ENCODE measurements at regions of chr6 and their contacts with region 1.

Region 1: GRCh38 chr6:46410334-46410953 is 80.8 kb downstream of the RCAN2 start:
- DNase-seq: peak; percentile 32
- ATAC-seq: peak; percentile 44; the same call in 1 of the 2 replicates
- H3K4me3 ChIP-seq: no peak overlapping the region
- H3K27ac ChIP-seq: no peak overlapping the region
- H3K4me1 ChIP-seq: no peaks in the 10 kb centered on the region
- H3K27me3 ChIP-seq: no peaks in the 10 kb centered on the region
- CTCF ChIP-seq: peak; percentile 49 to 77 (median 76); a peak in 5 of 6 replicates
- POLR2A ChIP-seq: no peak
- RAD21 ChIP-seq: peak; percentile 91

Region 2: DNA sequence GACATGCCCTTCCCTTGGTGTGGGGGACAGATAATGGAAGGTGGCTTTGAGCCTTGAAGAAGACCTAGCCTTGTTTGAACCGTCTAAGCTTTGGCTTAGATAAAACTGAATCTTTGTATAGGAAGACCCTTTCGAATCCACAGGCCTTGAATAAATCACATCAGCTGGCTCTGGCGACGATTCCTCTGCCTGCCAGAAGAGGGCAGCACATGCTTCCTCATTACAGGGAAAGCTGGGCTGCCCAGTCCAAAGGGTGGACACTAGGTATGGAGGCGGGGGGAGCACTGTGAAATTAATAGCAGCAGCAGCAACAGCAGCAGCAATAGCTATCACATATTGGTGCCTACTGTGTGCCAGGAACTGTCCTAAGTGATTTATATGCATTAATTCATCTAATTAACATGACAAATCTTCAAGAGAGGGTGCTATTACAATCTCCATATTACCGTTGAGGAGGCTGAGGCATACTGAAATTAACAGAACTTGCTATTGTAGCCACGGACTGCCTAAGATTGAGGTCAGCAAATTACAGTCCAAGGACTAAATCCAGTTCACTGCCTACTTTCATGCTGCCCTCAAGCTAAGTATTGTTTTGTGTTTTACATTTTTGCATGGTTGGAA is 479.9 kb before region 1 on chr6:
- CTCF ChIA-PET with region 1: interaction called, 17 read pairs
- POLR2A ChIA-PET with region 1: no interaction called
- RAD21 ChIA-PET with region 1: interaction called in 1 of 2 experiments, 6 read pairs
- intact Hi-C with region 1: loop called (anchors 1 kb)
- DNase-seq: peak; percentile 54
- ATAC-seq: peak; percentile 92
- H3K4me3 ChIP-seq: no peak overlapping the region
- H3K27ac ChIP-seq: no peak overlapping the region
- H3K4me1 ChIP-seq: peaks cover 0 to 4% of the 10 kb centered on the region in 2 experiments; a peak in 1 of 4 replicates
- H3K27me3 ChIP-seq: no peaks in the 10 kb centered on the region
- CTCF ChIP-seq: peak; percentile 67 to 99 (median 94); a peak in 5 of 6 replicates
- POLR2A ChIP-seq: no peak
- RAD21 ChIP-seq: peak; percentile 88

Region 3: GRCh38 chr6:46042355-46042999 is 368.0 kb before region 1 on chr6:
- CTCF ChIA-PET with region 1: interaction called, 3 read pairs
- POLR2A ChIA-PET with region 1: no interaction called
- RAD21 ChIA-PET with region 1: no interaction called
- intact Hi-C with region 1: loop called (anchors 2 kb)
- DNase-seq: peak; percentile 58
- ATAC-seq: peak; percentile 98
- H3K4me3 ChIP-seq: no peak overlapping the region
- H3K27ac ChIP-seq: no peak overlapping the region
- H3K4me1 ChIP-seq: peaks cover 5 to 11% of the 10 kb centered on the region in 2 experiments
- H3K27me3 ChIP-seq: no peaks in the 10 kb centered on the region
- CTCF ChIP-seq: peak; percentile 51 to 83 (median 64)
- POLR2A ChIP-seq: no peak
- RAD21 ChIP-seq: peak; percentile 69

Region 4: GRCh38 chr6:46221222-46221793 is 189.1 kb before region 1 on chr6:
- CTCF ChIA-PET with region 1: interaction called, 41 read pairs
- POLR2A ChIA-PET with region 1: interaction called, 3 read pairs
- RAD21 ChIA-PET with region 1: interaction called, 3 to 12 read pairs
- intact Hi-C with region 1: loop called (anchors 1 kb)
- DNase-seq: peak; percentile 18
- ATAC-seq: peak; percentile 83
- H3K4me3 ChIP-seq: no peak overlapping the region
- H3K27ac ChIP-seq: no peak overlapping the region
- H3K4me1 ChIP-seq: no peaks in the 10 kb centered on the region
- H3K27me3 ChIP-seq: 0 out of 2 replicates have a peak, but pooled peaks cover 4% of the 10 kb centered on the region
- CTCF ChIP-seq: peak; percentile 66 to 87 (median 74)
- POLR2A ChIP-seq: no peak
- RAD21 ChIP-seq: peak; percentile 85

Region 5: DNA sequence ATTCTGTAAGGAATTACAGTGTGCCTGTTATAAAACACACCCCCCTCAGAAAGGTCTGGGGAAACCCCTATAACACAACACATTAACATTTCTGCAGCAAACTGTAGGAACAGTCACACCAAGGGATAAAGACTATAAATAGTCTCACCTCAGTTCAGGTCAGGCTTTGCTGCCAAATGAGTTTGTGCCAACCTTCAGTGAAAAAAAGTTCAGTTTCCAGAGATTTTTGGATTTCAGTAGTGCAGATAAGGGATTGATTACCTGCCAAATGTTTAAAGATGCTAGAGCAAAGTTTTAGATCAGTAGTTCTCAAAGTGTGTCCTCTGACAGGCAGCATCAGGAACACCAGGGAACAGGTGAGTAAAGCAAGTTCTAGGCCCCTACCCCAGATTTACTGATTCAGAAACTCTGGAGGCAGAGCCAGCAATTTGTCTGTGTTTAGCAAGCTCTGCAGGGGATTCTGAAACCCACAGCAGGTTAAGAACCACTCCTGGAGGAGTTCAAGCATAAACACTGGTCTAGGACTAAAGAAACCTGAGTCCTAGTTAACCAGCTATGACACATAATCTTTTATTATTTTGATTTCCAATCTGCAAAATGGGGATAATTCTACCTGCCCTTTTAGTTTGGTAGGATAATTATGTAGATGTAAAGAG is 30.2 kb before region 1 on chr6:
- CTCF ChIA-PET with region 1: no interaction called
- POLR2A ChIA-PET with region 1: no interaction called
- RAD21 ChIA-PET with region 1: no interaction called
- intact Hi-C with region 1: no loop called
- DNase-seq: no peak
- ATAC-seq: no peak
- H3K4me3 ChIP-seq: no peak overlapping the region
- H3K27ac ChIP-seq: no peak overlapping the region
- H3K4me1 ChIP-seq: 0 out of 4 replicates have a peak, but pooled peaks cover 0 to 3% of the 10 kb centered on the region in 2 experiments
- H3K27me3 ChIP-seq: no peaks in the 10 kb centered on the region
- CTCF ChIP-seq: no peak
- POLR2A ChIP-seq: no peak
- RAD21 ChIP-seq: no peak

Measured in HCT116 (cell line).